ENCODE measurements at regions of chr7 and their contacts with region 1.

Region 1: DNA sequence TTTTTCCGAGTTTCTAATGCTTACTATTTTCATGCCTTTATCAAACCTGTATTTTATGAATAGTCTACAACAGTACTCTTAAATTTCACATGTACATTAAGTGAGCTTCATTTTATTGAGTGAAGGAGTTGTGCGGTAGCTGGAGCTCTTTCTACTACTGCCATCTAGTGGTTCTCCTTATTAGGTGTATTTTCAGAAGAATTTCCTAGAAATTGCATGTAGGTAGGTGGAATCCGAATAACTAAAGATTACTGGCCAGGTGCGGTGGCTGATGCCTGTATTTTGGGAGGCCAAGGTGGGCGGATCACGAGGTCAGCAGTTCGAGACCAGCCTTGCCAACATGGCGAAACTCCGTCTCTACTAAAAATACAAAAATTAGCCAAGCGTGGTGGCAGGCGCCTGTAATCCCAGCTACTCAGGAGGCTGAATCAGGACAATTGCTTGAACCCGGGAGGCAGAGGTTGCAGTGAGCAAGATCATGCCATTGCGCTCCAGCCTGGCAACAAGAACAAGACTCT is 38.3 kb downstream of the LRRC72 start:
- DNase-seq: no peak
- ATAC-seq: peak in 2 of 4 donors; percentile 49 to 67
- H3K4me3 ChIP-seq: no peak overlapping the region
- H3K27ac ChIP-seq: no peak overlapping the region
- H3K4me1 ChIP-seq: no peaks in the 10 kb centered on the region
- H3K27me3 ChIP-seq: no peaks in the 10 kb centered on the region
- CTCF ChIP-seq: peak; percentile 77

Region 2: DNA sequence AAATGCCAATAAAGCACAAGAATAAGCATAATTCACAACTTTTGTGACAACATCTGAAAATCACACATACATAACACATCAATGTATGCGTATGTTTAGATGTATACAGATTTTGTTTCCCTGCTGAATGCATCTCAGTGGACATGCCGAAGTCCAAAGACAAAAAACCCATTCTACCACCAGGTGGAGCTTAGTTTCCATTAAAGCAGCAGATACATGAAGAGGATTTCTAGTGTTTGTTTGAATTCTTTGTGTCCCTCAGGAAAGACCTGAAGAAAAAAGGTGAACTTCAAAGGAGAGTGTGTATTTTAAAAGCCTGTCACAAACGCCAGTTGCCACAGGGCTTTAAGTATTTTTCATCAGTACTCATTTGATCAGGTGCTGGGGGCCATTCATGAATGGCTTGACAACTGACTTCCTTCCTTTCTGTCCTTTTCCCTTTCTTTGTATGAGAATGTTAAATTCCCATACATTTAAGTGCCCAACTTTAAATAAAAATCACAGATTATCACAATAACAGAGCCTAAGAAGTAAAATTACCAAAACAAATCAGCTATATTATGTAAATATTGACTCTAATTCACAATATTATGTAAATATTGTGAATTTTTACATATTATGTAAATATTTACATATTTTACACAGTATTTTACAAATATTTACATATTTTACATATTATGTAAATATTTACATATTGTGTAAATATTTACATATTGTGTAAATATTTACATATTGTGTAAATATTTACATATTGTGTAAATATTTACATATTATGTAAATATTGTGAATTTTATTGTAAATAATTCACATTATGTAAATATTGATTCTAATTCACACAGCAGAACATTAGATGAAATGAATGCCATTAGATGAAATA is 486.7 kb before region 1 on chr7:
- intact Hi-C with region 1: loop called (anchors 2 kb)
- DNase-seq: no peak
- ATAC-seq: peak in 1 of 4 donors; percentile 58
- H3K4me3 ChIP-seq: no peak overlapping the region
- H3K27ac ChIP-seq: no peak overlapping the region
- H3K4me1 ChIP-seq: no peaks in the 10 kb centered on the region
- H3K27me3 ChIP-seq: no peaks in the 10 kb centered on the region
- CTCF ChIP-seq: peak; percentile 68

Region 3: GRCh38 chr7:16114633-16115032 is 450.3 kb before region 1 on chr7:
- intact Hi-C with region 1: loop called in 1 of 2 experiments (anchors 10 kb)
- DNase-seq: no peak
- ATAC-seq: no peak
- H3K4me3 ChIP-seq: no peak overlapping the region
- H3K27ac ChIP-seq: no peak overlapping the region
- H3K4me1 ChIP-seq: no peaks in the 10 kb centered on the region
- H3K27me3 ChIP-seq: no peaks in the 10 kb centered on the region
- CTCF ChIP-seq: peak; percentile 24

Region 4: DNA sequence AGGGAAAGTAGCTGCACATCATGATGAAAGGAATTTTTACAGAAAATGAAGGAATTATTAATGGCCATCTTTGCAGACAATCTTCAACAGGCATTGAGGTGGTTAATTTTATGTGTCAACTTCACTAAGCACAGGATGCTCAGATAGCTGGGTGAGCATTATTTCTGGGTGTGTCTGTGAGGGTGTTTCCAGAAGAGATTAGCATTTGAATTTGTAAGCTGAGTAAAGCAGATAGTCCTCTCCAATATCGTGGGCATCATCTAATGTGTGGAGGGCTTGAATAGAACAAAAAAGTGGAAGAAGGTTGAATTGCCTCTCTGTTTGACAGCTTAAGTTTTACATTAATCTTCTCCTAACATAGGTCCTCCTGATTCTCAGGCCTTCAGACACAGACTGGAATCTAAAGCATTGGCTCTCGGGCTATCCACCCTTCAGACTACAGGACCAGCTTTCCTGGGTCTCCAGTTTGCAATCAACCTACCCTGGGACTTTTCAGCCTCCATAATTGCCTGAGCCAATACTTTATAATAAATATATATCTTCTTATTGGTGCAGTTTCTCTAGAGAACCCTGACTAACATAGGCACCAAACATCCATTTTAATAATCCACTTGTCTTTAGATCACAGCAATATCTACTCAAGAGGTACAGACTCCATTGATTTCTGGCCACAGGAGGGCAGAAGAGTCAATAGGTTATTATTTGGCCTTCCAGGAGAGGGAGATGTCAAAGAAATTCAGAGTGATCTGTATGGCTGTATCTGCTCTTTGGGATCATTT is 133.1 kb before region 1 on chr7:
- intact Hi-C with region 1: loop called in 1 of 2 experiments (anchors 5 kb)
- DNase-seq: no peak
- ATAC-seq: peak in 3 of 4 donors; percentile 48 to 62 (median 55)
- H3K4me3 ChIP-seq: no peak overlapping the region
- H3K27ac ChIP-seq: no peak overlapping the region
- H3K4me1 ChIP-seq: no peaks in the 10 kb centered on the region
- H3K27me3 ChIP-seq: no peaks in the 10 kb centered on the region
- CTCF ChIP-seq: peak; percentile 50

Measured in psoas muscle (tissue), 8 donors.